ENCODE measurements at regions of chr21 and their contacts with region 1.

Region 1: DNA sequence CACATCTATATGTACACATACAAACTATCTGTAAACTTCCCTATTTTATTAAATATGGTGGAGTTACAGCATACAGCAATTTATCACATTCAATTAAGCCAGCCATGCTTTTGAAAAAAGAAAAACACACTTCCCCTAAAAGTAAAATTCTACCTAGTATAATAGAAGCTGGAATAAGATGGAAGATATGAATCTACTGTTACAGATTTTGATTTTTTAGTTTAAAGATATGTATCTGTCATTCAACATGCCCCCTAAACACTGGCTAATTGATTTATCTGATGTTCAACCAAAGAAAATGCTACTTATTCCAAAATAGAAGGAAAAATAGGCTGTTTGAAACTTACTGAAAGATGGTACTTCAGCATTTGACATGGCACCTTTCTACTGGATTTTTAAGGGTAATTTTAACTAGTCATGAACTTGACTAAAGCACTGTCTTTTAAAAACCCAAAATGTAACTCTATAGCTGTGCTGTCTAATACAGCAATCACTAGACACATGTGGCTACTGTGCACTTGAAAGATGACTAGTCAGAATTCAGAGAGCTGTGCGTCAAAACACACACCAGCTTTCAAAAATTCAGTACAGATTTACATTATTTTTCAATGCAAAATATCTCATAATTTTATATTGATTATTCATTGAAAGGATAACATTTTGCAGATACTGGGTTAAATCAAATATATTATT is 25.0 kb downstream of the NRIP1 start:
- DNase-seq: no peak
- H3K4me3 ChIP-seq: no peak overlapping the region
- H3K27ac ChIP-seq: no peak overlapping the region
- H3K4me1 ChIP-seq: no peaks in the 10 kb centered on the region
- H3K27me3 ChIP-seq: no peaks in the 10 kb centered on the region
- CTCF ChIP-seq: no peak

Region 2: DNA sequence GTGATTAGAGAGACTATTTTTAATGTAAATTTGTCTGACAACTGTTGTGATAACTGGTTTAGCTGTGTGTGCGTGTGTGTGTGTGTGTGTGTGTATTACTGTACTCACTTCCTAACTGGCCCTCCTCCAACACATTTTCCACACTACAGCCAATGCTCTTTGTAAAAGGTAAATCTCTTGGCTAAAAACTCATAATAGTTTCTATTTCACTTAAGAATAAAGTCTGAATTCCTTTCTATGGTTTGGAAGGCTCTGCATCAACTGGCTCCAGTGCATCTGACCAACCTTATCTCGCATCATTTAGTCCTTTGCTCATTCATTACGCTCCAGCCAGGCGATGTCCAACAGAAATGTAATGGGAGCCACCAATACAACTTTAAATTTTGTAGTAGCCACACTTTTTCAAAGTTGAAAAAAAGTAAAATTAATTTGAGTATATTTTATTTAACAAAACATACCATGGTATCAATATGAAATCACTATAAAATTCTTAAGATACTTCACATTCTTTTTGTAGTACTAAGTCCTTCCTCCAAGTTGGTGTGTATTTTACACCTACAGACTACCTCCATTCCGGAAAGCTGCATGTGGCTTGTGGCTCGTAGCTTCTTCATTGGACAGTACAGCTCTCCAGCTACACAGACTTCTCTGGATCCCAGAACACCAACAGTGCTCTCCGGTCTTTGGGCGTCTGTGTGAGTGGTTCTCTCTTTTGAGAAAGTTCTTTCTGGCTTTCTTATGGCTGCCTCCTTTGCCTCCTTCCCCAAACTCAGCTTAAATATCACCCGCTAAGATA is 43.9 kb before region 1 on chr21:
- intact Hi-C with region 1: loop called (anchors 10 kb)
- DNase-seq: no peak
- H3K4me3 ChIP-seq: no peak overlapping the region
- H3K27ac ChIP-seq: no peak overlapping the region
- H3K4me1 ChIP-seq: peaks cover 2% of the 10 kb centered on the region
- H3K27me3 ChIP-seq: no peaks in the 10 kb centered on the region
- CTCF ChIP-seq: no peak

Region 3: GRCh38 chr21:15095326-15095725 is 55.6 kb after region 1 on chr21:
- intact Hi-C with region 1: no loop called
- DNase-seq: no peak
- H3K4me3 ChIP-seq: no peak overlapping the region
- H3K27ac ChIP-seq: no peak overlapping the region
- H3K4me1 ChIP-seq: no peaks in the 10 kb centered on the region
- H3K27me3 ChIP-seq: no peaks in the 10 kb centered on the region
- CTCF ChIP-seq: no peak

Measured in colonic mucosa (tissue), 4 donors.